GM12878 (cell line): ENCODE measurements at regions of chr12 and their contacts with region 1.

Region 1: GRCh38 chr12:47837190-47838171 is 17.8 kb upstream of the HDAC7 start:
- DNase-seq: peak; percentile 20
- ATAC-seq: peak; percentile 78
- H3K4me3 ChIP-seq: no peak overlapping the region
- H3K27ac ChIP-seq: no peak overlapping the region
- H3K4me1 ChIP-seq: peaks cover 46% of the 10 kb centered on the region
- H3K27me3 ChIP-seq: no peaks in the 10 kb centered on the region; a peak in 2 of 4 replicates
- CTCF ChIP-seq: peak; percentile 81 to 85 (median 83)
- EP300 ChIP-seq: no peak
- POLR2A ChIP-seq: no peak
- RAD21 ChIP-seq: peak; percentile 93

Region 2: DNA sequence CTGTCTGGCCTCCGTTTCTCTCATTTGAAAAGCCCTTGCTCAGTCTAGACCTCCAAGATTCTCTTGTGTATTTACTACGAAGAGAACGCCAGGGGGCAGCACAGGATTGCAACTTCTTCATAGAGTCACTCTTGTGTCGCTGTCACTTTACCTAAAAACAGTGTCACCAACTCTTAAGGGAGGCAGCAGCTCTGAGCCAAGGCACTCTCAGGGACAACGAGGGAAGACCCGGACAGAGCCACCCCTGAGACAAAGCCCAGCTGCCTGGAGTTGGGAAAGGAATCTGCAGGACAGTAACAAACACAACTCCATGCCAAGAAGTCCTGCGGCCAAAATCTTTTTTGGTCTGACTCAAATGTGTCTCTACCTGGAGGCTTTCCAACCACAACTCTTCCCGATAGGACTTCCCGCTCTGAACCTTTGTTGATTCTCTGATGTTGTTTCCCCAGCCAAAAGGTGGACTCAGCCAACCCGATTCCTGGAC is 122.0 kb before region 1 on chr12:
- CTCF ChIA-PET with region 1: interaction called, 85 read pairs
- POLR2A ChIA-PET with region 1: no interaction called
- RAD21 ChIA-PET with region 1: interaction called, 21 read pairs
- SMC1A ChIA-PET with region 1: interaction called, 15 read pairs
- in situ Hi-C with region 1: loop called (anchors 5 kb)
- intact Hi-C with region 1: loop called (anchors 1 kb)
- DNase-seq: no peak
- ATAC-seq: peak; percentile 92
- H3K4me3 ChIP-seq: no peak overlapping the region
- H3K27ac ChIP-seq: no peak overlapping the region
- H3K4me1 ChIP-seq: no peaks in the 10 kb centered on the region
- H3K27me3 ChIP-seq: no peaks in the 10 kb centered on the region
- CTCF ChIP-seq: peak; percentile 65 to 88 (median 75); a peak in 5 of 6 replicates
- EP300 ChIP-seq: no peak
- POLR2A ChIP-seq: no peak
- RAD21 ChIP-seq: peak; percentile 92

Region 3: DNA sequence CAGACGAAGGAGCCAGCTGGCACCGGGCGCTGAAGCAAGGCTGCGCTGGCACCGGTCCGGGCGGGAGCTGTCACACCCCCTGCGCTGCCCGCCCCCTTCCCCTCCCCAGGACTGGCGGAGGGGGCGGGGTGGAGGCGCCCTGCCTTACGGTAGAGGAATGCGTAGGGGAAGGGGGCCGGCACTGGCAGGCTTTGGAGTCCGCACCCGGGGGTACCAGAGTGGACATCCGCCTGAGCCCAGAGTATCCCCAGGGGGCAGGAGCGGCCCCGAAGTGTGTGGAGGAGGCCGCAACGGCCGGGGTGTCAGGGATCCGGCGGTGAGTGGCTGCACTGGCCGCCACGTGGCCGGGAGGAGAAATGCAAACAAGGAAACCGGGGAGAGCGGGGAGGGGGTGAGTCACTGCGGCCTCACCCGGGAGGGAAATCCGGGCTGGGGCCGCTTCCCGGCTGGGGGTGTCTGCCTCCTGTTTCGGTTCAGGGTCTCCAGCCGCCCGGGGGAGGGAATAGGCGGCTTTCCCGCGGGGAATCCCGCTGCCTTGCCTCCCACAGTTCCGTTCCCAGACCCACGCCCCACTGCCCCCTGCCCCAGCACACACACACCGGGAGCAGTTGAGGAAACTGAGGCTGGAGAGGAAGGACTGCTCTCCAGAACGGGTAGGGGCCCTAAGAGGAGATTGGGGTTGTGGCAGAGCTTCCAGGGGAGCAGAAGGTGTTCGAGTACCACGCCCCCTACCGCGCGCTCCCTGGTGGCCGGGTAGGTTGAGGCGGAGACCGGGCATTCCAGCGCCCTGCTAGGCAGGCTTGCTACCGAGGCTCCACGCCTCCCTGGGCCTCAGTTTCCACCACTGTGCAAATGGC is 78.4 kb before region 1 on chr12 and contains the start of gene RAPGEF3:
- CTCF ChIA-PET with region 1: interaction called, 23 read pairs
- POLR2A ChIA-PET with region 1: interaction called, 3 read pairs
- RAD21 ChIA-PET with region 1: interaction called, 12 read pairs
- SMC1A ChIA-PET with region 1: interaction called, 4 read pairs
- in situ Hi-C with region 1: no loop called
- intact Hi-C with region 1: no loop called
- DNase-seq: no peak
- ATAC-seq: peak; percentile 68
- H3K4me3 ChIP-seq: peak within 1 kb of the TSS; percentile 66
- H3K27ac ChIP-seq: no peak within 1 kb of the TSS
- H3K4me1 ChIP-seq: peaks cover 37% of the 10 kb centered on the region
- H3K27me3 ChIP-seq: no peaks in the 10 kb centered on the region
- CTCF ChIP-seq: peak; percentile 36 to 68 (median 51); a peak in 5 of 6 replicates
- EP300 ChIP-seq: no peak
- POLR2A ChIP-seq: peak; percentile 21; the same call in 1 of the 2 replicates
- RAD21 ChIP-seq: no peak
- polyA plus RNA-seq, gene RAPGEF3: 0.02 TPM in 1 of 2 experiments, not detected in the other

Region 4: DNA sequence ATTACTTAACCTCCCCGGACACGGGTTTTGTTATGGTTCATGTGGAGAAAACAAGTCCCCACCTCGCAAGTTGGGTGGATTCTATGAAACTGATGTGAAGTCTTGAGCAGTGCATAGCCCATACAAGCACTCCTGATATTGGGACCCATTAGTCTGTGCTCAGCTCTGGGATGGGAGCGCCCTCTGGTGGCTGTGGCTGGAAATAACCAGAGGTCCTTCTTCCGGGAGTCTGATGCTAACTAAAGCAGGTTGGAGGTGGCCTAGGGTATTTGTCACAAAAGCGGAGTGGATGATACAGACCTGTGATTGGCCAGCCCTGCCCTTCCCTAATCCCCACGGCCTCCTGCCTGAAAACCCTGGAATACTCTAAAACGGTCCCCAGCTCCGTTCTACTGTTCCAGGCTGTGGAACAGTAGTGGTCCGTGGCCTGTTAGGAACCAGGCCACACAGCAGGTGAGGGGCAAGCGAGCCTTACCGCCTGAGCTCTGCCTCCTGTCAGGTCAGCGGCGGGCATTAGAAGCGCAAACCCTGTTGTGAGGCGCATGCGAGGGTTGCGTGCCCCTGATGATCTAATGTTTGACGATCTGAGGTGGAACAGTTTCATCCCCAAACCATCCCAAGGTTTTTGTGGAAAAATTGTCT is 58.1 kb before region 1 on chr12:
- CTCF ChIA-PET with region 1: interaction called, 167 read pairs
- POLR2A ChIA-PET with region 1: interaction called, 5 read pairs
- RAD21 ChIA-PET with region 1: interaction called, 28 read pairs
- SMC1A ChIA-PET with region 1: interaction called, 28 read pairs
- in situ Hi-C with region 1: no loop called
- intact Hi-C with region 1: loop called (anchors 5 kb)
- DNase-seq: peak; percentile 53
- ATAC-seq: peak; percentile 95
- H3K4me3 ChIP-seq: no peak overlapping the region
- H3K27ac ChIP-seq: no peak overlapping the region
- H3K4me1 ChIP-seq: peaks cover 11% of the 10 kb centered on the region; the same call in 1 of the 2 replicates
- H3K27me3 ChIP-seq: no peaks in the 10 kb centered on the region
- CTCF ChIP-seq: peak; percentile 92 to 97 (median 95)
- EP300 ChIP-seq: no peak
- POLR2A ChIP-seq: no peak; the same call in none of the 2 replicates
- RAD21 ChIP-seq: peak; percentile 95

Region 5: DNA sequence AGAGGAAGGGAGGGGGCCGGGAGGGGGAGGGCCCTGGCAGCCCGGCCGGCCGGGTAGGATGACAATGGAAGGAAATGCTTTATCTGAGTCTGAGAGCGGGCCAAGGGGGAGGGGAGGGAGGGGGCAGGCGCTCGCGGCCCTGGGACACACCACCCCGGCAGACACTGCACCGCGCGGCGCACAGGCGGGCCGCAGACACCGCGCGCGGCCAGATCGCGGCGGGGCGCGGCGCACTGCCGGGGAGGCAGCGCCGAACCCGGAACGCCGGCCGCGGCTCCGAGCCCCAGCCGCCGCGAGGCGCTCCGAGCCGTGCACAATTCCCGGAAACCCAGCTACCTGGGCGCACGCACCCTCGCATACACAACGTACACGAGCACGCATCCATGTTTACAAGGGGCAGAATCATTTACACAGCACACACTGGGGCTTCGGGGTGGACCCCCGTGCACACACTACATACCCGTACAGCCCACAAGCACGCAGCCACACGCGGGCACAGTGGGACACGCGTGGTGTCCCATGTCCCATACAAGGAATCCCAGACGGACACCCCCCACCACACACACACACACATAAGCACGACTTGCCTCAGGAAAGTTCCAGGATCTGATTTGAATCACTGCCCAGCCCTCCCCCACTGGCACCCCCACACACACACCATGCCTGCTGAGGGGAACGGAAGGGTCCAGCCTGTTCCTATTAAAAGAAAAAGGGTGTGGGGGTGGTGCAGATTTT is 17.4 kb before region 1 on chr12 and contains the start of gene HDAC7:
- CTCF ChIA-PET with region 1: interaction called, 108 read pairs
- POLR2A ChIA-PET with region 1: interaction called, 46 read pairs
- RAD21 ChIA-PET with region 1: interaction called, 202 read pairs
- SMC1A ChIA-PET with region 1: interaction called, 24 read pairs
- in situ Hi-C with region 1: no loop called
- intact Hi-C with region 1: no loop called
- DNase-seq: no peak
- ATAC-seq: peak; percentile 64
- H3K4me3 ChIP-seq: peak within 1 kb of the TSS; percentile 80
- H3K27ac ChIP-seq: peak within 1 kb of the TSS; percentile 46
- H3K4me1 ChIP-seq: peaks cover 27% of the 10 kb centered on the region
- H3K27me3 ChIP-seq: peaks cover 0 to 7% of the 10 kb centered on the region in 2 experiments; a peak in 3 of 4 replicates
- CTCF ChIP-seq: peak in 1 of 3 experiments; percentile 10; a peak in 1 of 6 replicates
- EP300 ChIP-seq: no peak
- POLR2A ChIP-seq: peak; percentile 79
- RAD21 ChIP-seq: no peak
- polyA plus RNA-seq, gene HDAC7: 0.47 to 1.3 TPM

Region 6: DNA sequence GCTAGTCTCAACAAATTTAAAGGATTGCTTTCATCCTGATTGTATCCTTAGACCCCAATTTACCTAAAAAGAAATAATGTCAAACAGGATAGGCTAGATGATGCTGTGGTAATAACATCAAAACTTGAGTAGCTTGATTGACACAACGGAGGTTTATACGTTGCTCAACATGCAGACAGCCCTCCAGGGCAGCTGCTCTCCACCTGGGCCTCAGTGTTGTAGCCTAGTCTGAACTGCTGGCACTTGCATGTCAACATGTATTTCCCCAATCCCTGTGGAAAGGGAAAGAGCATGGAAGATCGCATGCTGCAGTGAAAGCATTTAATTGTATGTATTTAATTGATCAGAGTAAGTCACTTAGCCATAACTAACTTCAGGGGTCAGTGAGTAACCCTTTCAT is 79.1 kb after region 1 on chr12:
- CTCF ChIA-PET with region 1: no interaction called
- POLR2A ChIA-PET with region 1: no interaction called
- RAD21 ChIA-PET with region 1: no interaction called
- SMC1A ChIA-PET with region 1: no interaction called
- in situ Hi-C with region 1: no loop called
- intact Hi-C with region 1: no loop called
- DNase-seq: no peak
- ATAC-seq: no peak
- H3K4me3 ChIP-seq: no peak overlapping the region
- H3K27ac ChIP-seq: no peak overlapping the region
- H3K4me1 ChIP-seq: no peaks in the 10 kb centered on the region
- H3K27me3 ChIP-seq: peaks cover 0 to 1% of the 10 kb centered on the region in 2 experiments; a peak in 1 of 4 replicates
- CTCF ChIP-seq: no peak
- EP300 ChIP-seq: no peak
- POLR2A ChIP-seq: no peak
- RAD21 ChIP-seq: no peak

Region 7: DNA sequence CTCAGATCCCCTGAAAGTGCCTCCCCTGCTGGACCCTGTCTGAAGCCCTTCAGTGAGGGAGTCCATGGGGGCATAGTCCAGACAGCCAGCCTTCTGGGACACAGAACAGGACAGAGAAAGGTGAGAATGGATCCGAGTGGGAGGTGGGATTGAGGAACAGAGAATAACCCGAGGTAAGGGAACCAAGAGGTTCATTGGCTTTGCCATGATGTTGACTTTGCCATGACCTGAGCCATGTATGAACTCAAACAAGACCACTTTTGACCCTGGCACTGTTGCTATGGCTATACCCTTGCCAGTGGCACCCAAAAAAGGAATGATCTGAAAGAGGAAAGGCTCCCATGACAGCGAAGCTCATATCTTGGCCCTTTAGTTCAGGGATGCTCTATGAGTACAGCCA is 89.9 kb after region 1 on chr12:
- CTCF ChIA-PET with region 1: no interaction called
- POLR2A ChIA-PET with region 1: no interaction called
- RAD21 ChIA-PET with region 1: no interaction called
- SMC1A ChIA-PET with region 1: no interaction called
- in situ Hi-C with region 1: no loop called
- intact Hi-C with region 1: no loop called
- DNase-seq: no peak
- ATAC-seq: no peak
- H3K4me3 ChIP-seq: no peak overlapping the region
- H3K27ac ChIP-seq: no peak overlapping the region
- H3K4me1 ChIP-seq: no peaks in the 10 kb centered on the region
- H3K27me3 ChIP-seq: peaks cover 7 to 14% of the 10 kb centered on the region in 2 experiments
- CTCF ChIP-seq: no peak
- EP300 ChIP-seq: no peak
- POLR2A ChIP-seq: no peak
- RAD21 ChIP-seq: no peak

Region 8: DNA sequence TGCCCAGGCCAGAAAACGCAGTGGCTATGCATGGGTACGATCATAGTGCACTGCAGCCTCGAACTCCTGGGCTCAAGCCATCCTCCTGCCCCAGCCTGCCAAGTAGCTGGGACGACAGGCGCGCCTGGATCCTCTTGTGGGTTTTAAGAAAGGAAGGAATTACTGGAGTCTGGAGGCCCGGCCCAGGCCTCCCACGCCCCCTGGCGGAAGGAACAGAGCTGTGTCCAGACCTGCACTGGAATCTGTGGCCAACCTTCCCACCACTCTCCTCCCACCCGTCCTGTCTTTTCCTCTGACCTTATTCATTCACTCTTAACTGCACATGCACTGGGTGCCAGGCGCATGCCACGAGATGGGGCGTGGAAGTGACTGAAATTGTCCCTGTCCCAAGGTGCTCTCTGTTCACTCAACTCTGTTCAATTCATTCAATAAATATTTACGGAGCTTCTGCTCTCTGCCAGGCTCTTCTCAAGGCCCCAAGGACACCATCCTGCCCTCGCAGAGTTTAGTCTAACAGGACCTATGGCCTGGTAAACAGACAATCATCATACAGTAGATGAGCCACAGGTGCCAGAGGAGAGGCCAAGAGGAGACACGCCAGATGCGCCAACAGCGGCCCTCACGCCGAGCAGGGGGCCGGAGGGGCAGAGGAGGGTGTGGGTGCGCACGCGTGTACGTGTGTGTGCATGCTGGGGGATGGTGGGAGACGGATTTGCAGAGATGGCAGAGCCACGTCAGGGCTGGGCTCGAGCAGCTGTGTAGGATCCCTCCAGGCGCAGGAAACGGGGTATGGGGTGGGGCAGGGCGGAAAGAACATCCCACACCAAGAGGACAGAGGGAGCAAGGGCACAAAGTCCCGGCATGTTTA is 112.2 kb after region 1 on chr12:
- CTCF ChIA-PET with region 1: interaction called, 35 read pairs
- POLR2A ChIA-PET with region 1: no interaction called
- RAD21 ChIA-PET with region 1: interaction called, 9 read pairs
- SMC1A ChIA-PET with region 1: interaction called, 12 read pairs
- in situ Hi-C with region 1: no loop called
- intact Hi-C with region 1: no loop called
- DNase-seq: no peak
- ATAC-seq: peak; percentile 93
- H3K4me3 ChIP-seq: no peak overlapping the region
- H3K27ac ChIP-seq: no peak overlapping the region
- H3K4me1 ChIP-seq: no peaks in the 10 kb centered on the region
- H3K27me3 ChIP-seq: 0 out of 4 replicates have a peak, but pooled peaks cover 0 to 5% of the 10 kb centered on the region in 2 experiments
- CTCF ChIP-seq: peak; percentile 75 to 89 (median 87)
- EP300 ChIP-seq: no peak
- POLR2A ChIP-seq: no peak
- RAD21 ChIP-seq: peak; percentile 76

Region 9: DNA sequence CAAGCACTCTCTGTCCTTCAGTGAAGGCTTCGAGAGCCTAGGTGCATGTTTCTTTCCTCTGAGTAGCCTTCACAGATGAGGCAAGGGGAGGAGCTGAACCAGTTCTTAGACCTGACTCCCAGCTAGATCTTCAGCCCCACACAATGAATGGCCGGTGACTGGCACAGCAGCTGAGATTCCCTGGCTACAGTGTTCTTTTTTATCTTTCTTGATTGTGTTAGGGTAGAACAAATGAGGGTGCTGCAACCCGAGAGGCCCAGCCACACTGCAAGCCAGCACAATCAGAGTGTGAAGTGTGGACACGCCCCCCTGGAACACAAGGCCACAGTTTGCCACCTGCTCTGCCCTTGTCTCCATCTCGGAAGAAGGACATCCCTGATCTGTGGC is 185.9 kb after region 1 on chr12:
- CTCF ChIA-PET with region 1: no interaction called
- POLR2A ChIA-PET with region 1: no interaction called
- RAD21 ChIA-PET with region 1: no interaction called
- SMC1A ChIA-PET with region 1: no interaction called
- in situ Hi-C with region 1: no loop called
- intact Hi-C with region 1: no loop called
- DNase-seq: no peak
- ATAC-seq: no peak
- H3K4me3 ChIP-seq: no peak overlapping the region
- H3K27ac ChIP-seq: no peak overlapping the region
- H3K4me1 ChIP-seq: no peaks in the 10 kb centered on the region
- H3K27me3 ChIP-seq: peaks cover 3 to 5% of the 10 kb centered on the region in 2 experiments; a peak in 3 of 4 replicates
- CTCF ChIP-seq: no peak
- EP300 ChIP-seq: no peak
- POLR2A ChIP-seq: no peak
- RAD21 ChIP-seq: no peak

Region 10: GRCh38 chr12:48128800-48129199 is 291.3 kb after region 1 on chr12:
- CTCF ChIA-PET with region 1: no interaction called
- POLR2A ChIA-PET with region 1: no interaction called
- RAD21 ChIA-PET with region 1: no interaction called
- SMC1A ChIA-PET with region 1: no interaction called
- in situ Hi-C with region 1: no loop called
- intact Hi-C with region 1: no loop called
- DNase-seq: no peak
- ATAC-seq: no peak
- H3K4me3 ChIP-seq: no peak overlapping the region
- H3K27ac ChIP-seq: no peak overlapping the region
- H3K4me1 ChIP-seq: no peaks in the 10 kb centered on the region
- H3K27me3 ChIP-seq: no peaks in the 10 kb centered on the region
- CTCF ChIP-seq: no peak
- EP300 ChIP-seq: no peak
- POLR2A ChIP-seq: no peak
- RAD21 ChIP-seq: no peak